Activated T-helper 2 cell treated with anti-CD3 and anti-CD28 coated beads, Interferon-gamma antibody, Interleukin-2, Interleukin-4, amounts not matched to agents 10 μg/mL and 5 μg/mL and 100 μg/mL, durations not matched to agents 14 hours and 24 hours and 36 hours (primary cell): ENCODE measurements at regions of chr14 and their contacts with region 1.

Region 1: GRCh38 chr14:73741386-73741875 is 27.2 kb upstream of the PNMA1 start:
- DNase-seq: peak; percentile 75
- H3K4me3 Mint-ChIP-seq: peak overlapping the region; percentile 72
- H3K27ac Mint-ChIP-seq: peak overlapping the region; percentile 80
- H3K4me1 Mint-ChIP-seq: peaks cover 63% of the 10 kb centered on the region
- H3K27me3 Mint-ChIP-seq: no peaks in the 10 kb centered on the region

Region 2: GRCh38 chr14:73428353-73428824 is 313.0 kb before region 1 on chr14:
- intact Hi-C with region 1: no loop called
- DNase-seq: no peak
- H3K4me3 Mint-ChIP-seq: no peak overlapping the region
- H3K27ac Mint-ChIP-seq: no peak overlapping the region
- H3K4me1 Mint-ChIP-seq: peaks cover 10% of the 10 kb centered on the region
- H3K27me3 Mint-ChIP-seq: no peaks in the 10 kb centered on the region

Region 3: GRCh38 chr14:73753959-73754882 is 12.8 kb after region 1 on chr14:
- intact Hi-C with region 1: loop called (anchors 1 kb)
- DNase-seq: peak; percentile 50
- H3K4me3 Mint-ChIP-seq: peak overlapping the region; percentile 91
- H3K27ac Mint-ChIP-seq: peak overlapping the region; percentile 75
- H3K4me1 Mint-ChIP-seq: peaks cover 87% of the 10 kb centered on the region
- H3K27me3 Mint-ChIP-seq: no peaks in the 10 kb centered on the region

Region 4: DNA sequence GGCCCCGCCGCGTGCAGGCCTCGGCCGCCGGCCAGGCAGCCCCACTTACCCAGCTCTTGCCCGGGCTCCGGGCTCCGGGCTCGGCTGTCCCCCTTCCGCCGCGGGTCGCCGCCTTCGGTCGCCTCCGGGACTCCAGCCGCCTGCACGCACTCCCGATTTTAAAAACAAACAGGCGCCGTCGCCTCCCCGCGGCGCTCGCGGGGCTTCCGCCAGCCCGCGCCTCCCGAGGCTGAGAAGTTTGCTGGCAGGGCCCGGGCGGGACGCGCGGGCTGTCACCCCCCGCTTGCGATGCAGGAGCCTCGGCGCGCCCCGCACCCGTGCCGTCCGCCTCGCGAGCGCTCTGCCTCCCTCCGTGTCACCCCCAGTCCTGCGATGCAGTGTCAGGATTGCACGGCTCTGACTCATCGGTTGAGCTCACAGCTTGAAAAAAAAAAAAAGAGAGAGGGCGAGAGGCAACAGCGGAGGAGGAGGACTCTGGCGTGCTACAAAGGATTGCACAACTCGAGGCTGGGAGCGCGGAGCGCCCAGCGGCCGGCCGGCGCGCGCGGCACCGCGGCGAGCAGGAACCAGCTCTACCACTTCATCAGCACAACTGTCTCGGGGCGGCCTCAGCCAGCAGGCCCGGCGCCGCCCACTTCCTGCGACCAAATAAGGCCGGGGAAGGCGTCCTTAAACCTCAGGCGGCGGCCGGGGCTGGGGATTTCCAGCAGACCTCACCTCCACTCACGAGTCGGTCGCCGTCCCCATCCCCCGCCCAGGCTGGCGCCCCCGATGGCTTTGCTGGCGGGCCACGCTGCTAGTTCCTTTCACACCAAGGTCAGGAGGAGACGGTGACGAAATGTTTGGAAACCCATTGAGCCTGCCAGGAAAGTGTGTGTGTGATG is 18.5 kb after region 1 on chr14:
- intact Hi-C with region 1: loop called (anchors 2 kb)
- DNase-seq: peak; percentile 95
- H3K4me3 Mint-ChIP-seq: peak overlapping the region; percentile 83
- H3K27ac Mint-ChIP-seq: peak overlapping the region; percentile 94
- H3K4me1 Mint-ChIP-seq: peaks cover 75% of the 10 kb centered on the region
- H3K27me3 Mint-ChIP-seq: no peaks in the 10 kb centered on the region

Region 5: GRCh38 chr14:73825551-73826188 is 84.2 kb after region 1 on chr14:
- intact Hi-C with region 1: loop called (anchors 5 kb)
- DNase-seq: peak; percentile 52
- H3K4me3 Mint-ChIP-seq: no peak overlapping the region
- H3K27ac Mint-ChIP-seq: no peak overlapping the region
- H3K4me1 Mint-ChIP-seq: peaks cover 23% of the 10 kb centered on the region
- H3K27me3 Mint-ChIP-seq: peaks cover 11% of the 10 kb centered on the region

Region 6: DNA sequence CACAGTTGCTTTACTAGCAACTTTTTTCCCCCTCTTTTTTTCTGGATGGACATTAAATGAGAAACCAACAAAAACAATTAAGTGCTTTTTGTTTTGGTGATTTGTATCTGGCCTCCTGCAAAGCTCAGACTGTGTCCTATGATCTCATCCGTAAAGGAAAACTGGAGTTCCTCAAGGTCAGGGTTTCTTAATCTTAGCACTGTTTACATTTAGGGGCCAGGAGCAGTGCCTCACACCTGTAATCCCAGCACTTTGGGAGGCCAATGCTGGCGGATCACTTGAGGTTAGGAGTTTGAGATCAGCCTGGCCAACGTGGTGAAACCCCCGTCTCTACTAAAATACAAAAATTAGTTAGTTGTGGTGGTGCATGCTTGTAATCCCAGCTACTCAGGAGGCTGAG is 249.7 kb after region 1 on chr14:
- intact Hi-C with region 1: no loop called
- DNase-seq: no peak
- H3K4me3 Mint-ChIP-seq: no peak overlapping the region
- H3K27ac Mint-ChIP-seq: no peak overlapping the region
- H3K4me1 Mint-ChIP-seq: no peaks in the 10 kb centered on the region
- H3K27me3 Mint-ChIP-seq: no peaks in the 10 kb centered on the region

Region 7: DNA sequence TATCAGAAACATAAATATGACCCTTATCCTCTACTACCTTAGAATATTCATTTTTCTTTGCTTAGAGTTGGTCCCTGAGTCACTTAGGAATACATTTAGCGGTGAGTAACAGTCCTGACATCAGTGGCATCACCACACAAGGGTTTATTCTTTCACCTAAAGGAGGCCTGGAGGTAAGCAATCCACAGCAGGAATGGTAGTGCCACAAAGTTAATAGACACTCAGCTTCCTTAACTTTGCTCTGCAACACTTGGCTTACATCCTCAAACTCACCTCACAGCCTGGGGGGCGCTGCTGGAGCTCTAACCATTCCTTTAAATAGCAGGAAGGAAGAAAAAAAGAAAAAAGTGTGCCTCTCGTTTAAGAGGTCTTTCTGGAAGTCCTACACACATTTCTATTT is 306.9 kb after region 1 on chr14:
- intact Hi-C with region 1: loop called (anchors 10 kb)
- DNase-seq: no peak
- H3K4me3 Mint-ChIP-seq: no peak overlapping the region
- H3K27ac Mint-ChIP-seq: no peak overlapping the region
- H3K4me1 Mint-ChIP-seq: no peaks in the 10 kb centered on the region
- H3K27me3 Mint-ChIP-seq: no peaks in the 10 kb centered on the region